H1 (cell line): ENCODE measurements at regions of chr7 and their contacts with region 1.

Region 1: DNA sequence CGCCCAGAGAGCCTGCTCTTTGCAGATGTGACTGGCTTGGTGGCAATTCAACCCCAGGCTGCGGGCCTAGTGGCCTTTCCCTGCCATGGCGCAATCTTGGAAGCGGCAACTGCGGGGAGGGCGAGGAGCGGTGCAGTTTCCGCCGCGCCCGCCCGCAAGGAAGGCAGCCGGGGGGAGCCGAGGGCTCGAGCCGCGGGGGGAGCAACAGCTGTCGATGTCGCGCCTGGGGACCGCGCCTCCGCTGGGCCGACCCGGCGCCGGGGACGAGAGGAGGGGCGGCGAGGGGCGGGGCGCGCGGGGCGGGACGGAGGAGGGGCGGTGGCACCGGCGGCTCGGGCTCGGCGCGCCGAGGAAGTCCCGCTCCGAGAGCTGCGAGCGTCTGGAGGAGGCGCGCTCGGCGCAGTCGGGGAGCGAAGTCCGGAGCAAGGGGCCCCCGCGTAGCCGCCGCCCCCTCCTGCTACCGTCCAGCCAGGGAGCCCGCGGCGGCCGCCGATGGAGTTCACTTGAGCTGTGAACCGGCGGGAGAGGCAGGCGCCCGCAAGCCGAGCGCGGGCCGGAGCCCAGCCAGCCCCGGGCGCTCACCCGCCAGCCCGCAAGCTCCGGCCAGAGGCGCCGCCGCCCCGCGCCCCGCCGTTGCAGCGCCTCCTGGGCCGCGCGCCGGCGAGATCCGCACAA is 438.1 kb upstream of the GALNT17 start:
- DNase-seq: peak in 1 of 2 experiments; percentile 85
- H3K4me3 ChIP-seq: peak overlapping the region; percentile 90 to 98 (median 92)
- H3K27ac ChIP-seq: no peak overlapping the region; the same call in 1 of the 2 replicates
- H3K4me1 ChIP-seq: peaks cover 4 to 16% (median 6%) of the 10 kb centered on the region in 4 experiments; a peak in 6 of 7 replicates
- H3K27me3 ChIP-seq: peaks cover 2 to 14% (median 13%) of the 10 kb centered on the region in 4 experiments
- CTCF ChIP-seq: peak in 2 of 3 experiments; percentile 29; a peak in 2 of 4 replicates
- EP300 ChIP-seq: no peak
- POLR2A ChIP-seq: peak; percentile 60 to 64
- RAD21 ChIP-seq: peak in 1 of 2 experiments; percentile 20; a peak in 2 of 4 replicates

Region 2: DNA sequence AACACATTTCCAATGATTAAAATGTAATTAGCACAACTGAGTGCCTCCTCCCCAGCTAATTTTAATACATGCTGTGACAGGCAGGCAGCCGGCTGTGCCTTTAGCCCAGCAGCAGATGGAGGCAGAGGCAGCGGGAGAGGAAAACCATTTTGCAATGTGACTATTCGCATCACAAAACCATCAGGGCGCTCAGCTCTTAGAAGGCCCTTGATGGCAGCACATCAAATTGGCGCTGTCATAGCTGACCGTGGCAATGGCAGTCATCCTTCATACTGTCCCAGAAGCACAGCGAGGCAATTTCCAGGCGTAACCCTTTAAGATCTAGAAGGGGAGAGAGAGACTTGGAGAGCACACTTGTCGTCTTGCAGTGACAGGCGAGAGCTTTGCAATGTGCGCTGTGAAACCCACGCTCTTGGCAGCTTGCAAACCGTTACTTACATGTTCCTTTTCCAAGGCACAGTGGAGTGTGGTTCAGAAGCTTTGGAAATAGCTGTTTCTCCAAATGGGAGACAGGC is 276.6 kb before region 1 on chr7:
- CTCF ChIA-PET with region 1: interaction called, 10 read pairs
- POLR2A ChIA-PET with region 1: interaction called, 4 read pairs
- DNase-seq: peak in 1 of 2 experiments; percentile 55
- H3K4me3 ChIP-seq: no peak overlapping the region
- H3K27ac ChIP-seq: no peak overlapping the region
- H3K4me1 ChIP-seq: peaks cover 3 to 12% (median 11%) of the 10 kb centered on the region in 4 experiments; a peak in 6 of 7 replicates
- H3K27me3 ChIP-seq: no peaks in the 10 kb centered on the region; a peak in 2 of 7 replicates
- CTCF ChIP-seq: peak; percentile 17 to 32 (median 23); a peak in 3 of 4 replicates
- EP300 ChIP-seq: no peak
- POLR2A ChIP-seq: no peak
- RAD21 ChIP-seq: peak; percentile 51 to 64

Region 3: DNA sequence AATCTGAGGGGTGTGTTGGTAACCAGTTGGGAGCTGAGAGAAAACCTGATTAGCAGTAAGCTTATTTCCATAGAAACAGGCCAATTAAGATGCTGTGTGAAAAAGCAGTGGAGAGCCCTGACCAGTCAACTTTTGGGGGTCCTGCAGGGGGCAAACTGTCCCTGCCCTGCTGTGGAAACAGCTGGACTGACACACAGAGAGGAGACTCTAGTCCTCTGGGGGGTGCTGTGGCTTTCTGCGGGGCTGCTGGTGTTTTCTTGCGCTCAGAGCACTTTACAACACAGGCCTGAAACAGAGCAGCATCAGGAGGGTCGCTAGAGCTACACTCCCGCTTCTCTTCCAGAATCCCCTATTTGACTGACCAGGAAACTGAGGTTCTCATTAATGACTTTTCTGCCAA is 108.8 kb before region 1 on chr7:
- CTCF ChIA-PET with region 1: interaction called, 46 read pairs
- POLR2A ChIA-PET with region 1: interaction called, 9 read pairs
- DNase-seq: peak in 1 of 2 experiments; percentile 69
- H3K4me3 ChIP-seq: no peak overlapping the region
- H3K27ac ChIP-seq: no peak overlapping the region
- H3K4me1 ChIP-seq: peaks cover 11 to 34% (median 19%) of the 10 kb centered on the region in 4 experiments
- H3K27me3 ChIP-seq: 0 out of 7 replicates have a peak, but pooled peaks cover 0 to 1% (median 0%) of the 10 kb centered on the region in 4 experiments
- CTCF ChIP-seq: peak; percentile 72 to 97 (median 79)
- EP300 ChIP-seq: no peak
- POLR2A ChIP-seq: no peak
- RAD21 ChIP-seq: peak; percentile 80 to 87

Region 4: GRCh38 chr7:70595753-70596597 is 97.8 kb before region 1 on chr7:
- CTCF ChIA-PET with region 1: interaction called, 13 read pairs
- POLR2A ChIA-PET with region 1: interaction called, 4 read pairs
- DNase-seq: peak in 1 of 2 experiments; percentile 81
- H3K4me3 ChIP-seq: peak overlapping the region; percentile 59 to 74 (median 64)
- H3K27ac ChIP-seq: no peak overlapping the region
- H3K4me1 ChIP-seq: peaks cover 3 to 9% (median 5%) of the 10 kb centered on the region in 4 experiments; a peak in 6 of 7 replicates
- H3K27me3 ChIP-seq: peaks cover 11 to 51% (median 41%) of the 10 kb centered on the region in 4 experiments
- CTCF ChIP-seq: no peak
- EP300 ChIP-seq: no peak
- POLR2A ChIP-seq: no peak
- RAD21 ChIP-seq: no peak

Region 5: GRCh38 chr7:70681469-70682350 is 12.1 kb before region 1 on chr7:
- CTCF ChIA-PET with region 1: interaction called, 3 read pairs
- POLR2A ChIA-PET with region 1: interaction called, 14 read pairs
- DNase-seq: no peak
- H3K4me3 ChIP-seq: peak overlapping the region in 3 of 4 experiments; percentile 3 to 41 (median 6); a peak in 2 of 8 replicates
- H3K27ac ChIP-seq: no peak overlapping the region
- H3K4me1 ChIP-seq: peaks cover 1 to 12% (median 6%) of the 10 kb centered on the region in 4 experiments; a peak in 5 of 7 replicates
- H3K27me3 ChIP-seq: peaks cover 8 to 54% (median 38%) of the 10 kb centered on the region in 4 experiments
- CTCF ChIP-seq: no peak
- EP300 ChIP-seq: no peak
- POLR2A ChIP-seq: no peak
- RAD21 ChIP-seq: no peak

Region 6: GRCh38 chr7:70704831-70705346 is 11.1 kb after region 1 on chr7:
- CTCF ChIA-PET with region 1: interaction called, 7 read pairs
- POLR2A ChIA-PET with region 1: interaction called, 21 read pairs
- DNase-seq: no peak
- H3K4me3 ChIP-seq: peak overlapping the region in 1 of 4 experiments; percentile 0; a peak in 1 of 8 replicates
- H3K27ac ChIP-seq: no peak overlapping the region
- H3K4me1 ChIP-seq: peaks cover 23 to 61% (median 52%) of the 10 kb centered on the region in 4 experiments
- H3K27me3 ChIP-seq: no peaks in the 10 kb centered on the region
- CTCF ChIP-seq: no peak
- EP300 ChIP-seq: no peak
- POLR2A ChIP-seq: no peak
- RAD21 ChIP-seq: no peak

Region 7: GRCh38 chr7:70710011-70710480 is 16.2 kb after region 1 on chr7:
- CTCF ChIA-PET with region 1: interaction called, 11 read pairs
- POLR2A ChIA-PET with region 1: interaction called, 21 read pairs
- DNase-seq: no peak
- H3K4me3 ChIP-seq: no peak overlapping the region
- H3K27ac ChIP-seq: no peak overlapping the region
- H3K4me1 ChIP-seq: peaks cover 20 to 31% (median 27%) of the 10 kb centered on the region in 4 experiments
- H3K27me3 ChIP-seq: no peaks in the 10 kb centered on the region
- CTCF ChIP-seq: no peak
- EP300 ChIP-seq: no peak
- POLR2A ChIP-seq: no peak
- RAD21 ChIP-seq: no peak